Astrocyte of the cerebellum (primary cell): ENCODE measurements at regions of chr16 and their contacts with region 1.

Region 1: DNA sequence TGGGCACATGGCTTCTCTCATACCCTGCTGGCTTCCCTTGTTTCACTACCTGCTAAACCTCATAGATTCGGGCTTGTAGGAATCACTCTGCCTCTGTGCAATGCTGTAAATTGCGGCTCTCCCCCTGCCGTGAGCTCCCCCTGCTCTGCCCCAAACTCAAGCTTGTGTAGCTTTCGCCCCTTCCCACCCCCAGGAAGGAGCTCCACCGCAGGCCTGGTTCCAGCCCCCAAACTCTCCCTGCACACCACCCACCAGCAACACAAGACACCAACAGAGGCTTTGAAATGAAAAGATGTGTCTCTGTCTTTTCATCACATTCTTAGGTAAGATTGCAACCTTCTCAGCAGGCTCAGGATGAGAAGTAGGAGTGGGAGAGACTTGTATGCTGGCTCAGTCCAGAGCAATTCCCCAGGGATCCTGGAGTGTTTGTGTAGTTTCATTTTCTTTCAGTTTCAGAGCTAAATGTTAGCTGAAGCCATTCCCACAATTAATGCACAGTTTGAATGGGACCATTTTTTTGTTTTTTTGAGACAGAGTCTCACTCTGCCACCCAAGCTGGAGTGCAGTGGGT is 14.2 kb downstream of the CX3CL1 start:
- DNase-seq: peak; percentile 63
- H3K4me3 ChIP-seq: no peak overlapping the region
- CTCF ChIP-seq: no peak

Region 2: GRCh38 chr16:57284208-57284951 is 102.1 kb before region 1 on chr16 and contains the start of gene PLLP:
- in situ Hi-C with region 1: no loop called
- DNase-seq: no peak
- H3K4me3 ChIP-seq: peak within 1 kb of the TSS; percentile 40
- CTCF ChIP-seq: no peak

Region 3: DNA sequence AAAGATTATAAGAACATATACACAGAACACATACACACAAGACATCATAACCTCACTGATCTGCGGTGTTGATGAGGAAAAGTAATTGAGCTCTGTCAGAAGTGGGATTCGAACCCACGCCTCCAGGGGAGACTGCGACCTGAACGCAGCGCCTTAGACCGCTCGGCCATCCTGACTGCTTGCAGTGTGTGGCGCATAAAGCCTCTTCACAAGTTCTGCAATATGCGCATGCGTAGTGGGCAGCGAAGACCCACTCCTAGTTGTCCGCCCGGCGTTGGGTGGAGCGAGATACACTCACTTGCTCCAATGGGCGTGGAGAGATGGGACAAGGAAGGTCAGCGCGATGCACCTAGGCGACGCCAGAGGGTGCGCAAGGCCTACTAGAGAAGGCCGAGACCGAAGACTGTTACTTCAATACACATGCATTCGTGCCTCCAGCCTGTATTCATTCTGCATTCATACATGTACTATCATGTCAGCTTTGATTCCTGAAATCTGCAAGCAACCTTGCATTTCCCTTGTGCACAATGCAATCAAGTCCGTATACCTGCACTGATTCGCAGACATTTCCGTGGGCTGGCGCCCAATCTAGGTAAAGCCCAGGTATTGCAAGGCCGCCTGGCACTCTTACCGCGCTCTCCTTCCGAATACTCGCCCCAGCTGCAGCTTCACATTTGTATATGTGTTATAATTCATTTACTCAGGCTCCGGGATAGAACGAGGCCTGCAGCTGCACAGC is 85.9 kb before region 1 on chr16:
- in situ Hi-C with region 1: no loop called
- DNase-seq: peak; percentile 98
- H3K4me3 ChIP-seq: peak overlapping the region; percentile 44
- CTCF ChIP-seq: peak; percentile 96

Region 4: DNA sequence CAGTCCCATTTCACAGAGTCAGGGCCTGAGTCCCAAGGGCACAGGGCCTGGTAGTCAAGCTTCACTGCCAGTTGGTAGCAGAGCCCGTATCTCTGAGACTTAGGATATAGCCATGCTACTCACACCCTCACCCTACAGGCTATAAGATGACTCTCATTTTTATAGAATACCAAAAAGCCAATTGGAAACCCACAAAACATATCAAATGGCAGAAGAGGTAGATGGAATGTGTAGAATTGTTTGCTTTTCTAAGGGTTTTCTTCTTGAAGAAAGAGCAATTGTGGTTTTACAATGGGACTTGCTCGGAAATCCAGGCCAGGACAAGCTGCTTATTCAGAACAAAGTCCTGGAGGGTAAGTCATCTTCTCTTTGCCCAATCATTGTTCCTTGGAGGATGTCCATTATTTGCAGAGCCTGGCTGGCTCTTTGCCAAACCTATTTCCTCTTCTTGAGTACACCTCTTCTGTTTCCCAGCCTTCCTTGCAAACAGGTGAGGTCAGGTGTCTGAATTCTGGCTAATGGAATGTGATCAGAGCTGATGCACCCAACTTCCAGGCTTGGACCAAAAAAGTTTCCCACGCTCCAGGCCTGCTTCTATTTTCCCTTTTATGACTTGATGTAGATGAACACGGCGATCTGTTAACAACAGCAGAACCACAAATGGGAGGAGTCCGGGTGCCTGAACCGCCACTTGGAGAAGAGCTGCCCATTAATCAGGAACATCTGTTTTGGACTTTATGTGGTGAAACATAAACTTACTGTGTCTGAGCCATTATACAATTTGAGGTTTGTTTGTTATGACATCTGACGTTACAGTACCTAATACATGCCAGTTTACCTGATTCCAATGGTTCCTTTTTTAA is 44.8 kb before region 1 on chr16:
- in situ Hi-C with region 1: loop called (anchors 5 kb)
- DNase-seq: peak; percentile 81
- H3K4me3 ChIP-seq: no peak overlapping the region
- CTCF ChIP-seq: no peak

Region 5: GRCh38 chr16:57352636-57353047 is 33.8 kb before region 1 on chr16:
- in situ Hi-C with region 1: no loop called
- DNase-seq: no peak
- H3K4me3 ChIP-seq: no peak overlapping the region
- CTCF ChIP-seq: no peak